ENCODE measurements at regions of chr3 and their contacts with region 1.

Region 1: DNA sequence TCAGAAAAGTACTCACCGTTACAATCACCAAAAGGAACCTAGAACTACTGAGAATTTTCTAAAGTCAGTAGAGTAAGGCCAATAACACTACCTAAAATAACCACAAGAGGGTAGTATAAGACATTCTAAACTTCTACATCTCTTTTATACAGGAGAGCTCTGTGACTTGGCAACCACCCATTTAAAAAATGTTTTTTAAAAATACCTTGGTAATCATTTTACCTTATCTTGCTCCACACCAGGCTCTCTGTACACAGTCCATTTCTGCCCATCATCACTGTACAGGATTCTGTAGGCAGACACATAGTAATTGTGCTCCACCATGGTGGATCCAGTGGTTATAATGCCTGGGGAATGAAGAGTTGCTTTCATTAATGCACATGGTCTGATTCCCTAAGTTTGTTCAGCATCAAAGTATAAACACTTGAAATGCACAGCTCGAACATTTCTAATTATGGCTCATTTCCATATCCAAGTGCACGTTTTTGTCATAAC is 54.5 kb downstream of the ST3GAL6 start:
- DNase-seq: no peak
- H3K4me3 ChIP-seq: no peak overlapping the region
- H3K27ac ChIP-seq: no peak overlapping the region
- H3K4me1 ChIP-seq: no peaks in the 10 kb centered on the region
- H3K27me3 ChIP-seq: no peaks in the 10 kb centered on the region
- CTCF ChIP-seq: peak; percentile 38 to 86 (median 66)
- POLR2A ChIP-seq: no peak

Region 2: GRCh38 chr3:98602078-98602678 is 215.4 kb before region 1 on chr3:
- intact Hi-C with region 1: loop called (anchors 5 kb)
- DNase-seq: peak; percentile 26 to 38
- H3K4me3 ChIP-seq: no peak overlapping the region
- H3K27ac ChIP-seq: no peak overlapping the region
- H3K4me1 ChIP-seq: peaks cover 0 to 8% of the 10 kb centered on the region in 2 donors
- H3K27me3 ChIP-seq: no peaks in the 10 kb centered on the region
- CTCF ChIP-seq: peak; percentile 23 to 82 (median 66)
- POLR2A ChIP-seq: no peak

Region 3: GRCh38 chr3:98732286-98733052 is 85.1 kb before region 1 on chr3:
- intact Hi-C with region 1: no loop called
- DNase-seq: peak; percentile 68 to 73
- H3K4me3 ChIP-seq: peak overlapping the region; percentile 63 to 86 (median 84)
- H3K27ac ChIP-seq: peak overlapping the region; percentile 61 to 92 (median 92)
- H3K4me1 ChIP-seq: peaks cover 0 to 4% of the 10 kb centered on the region in 2 donors
- H3K27me3 ChIP-seq: no peaks in the 10 kb centered on the region
- CTCF ChIP-seq: no peak
- POLR2A ChIP-seq: peak in 1 of 2 donors; percentile 84

Region 4: DNA sequence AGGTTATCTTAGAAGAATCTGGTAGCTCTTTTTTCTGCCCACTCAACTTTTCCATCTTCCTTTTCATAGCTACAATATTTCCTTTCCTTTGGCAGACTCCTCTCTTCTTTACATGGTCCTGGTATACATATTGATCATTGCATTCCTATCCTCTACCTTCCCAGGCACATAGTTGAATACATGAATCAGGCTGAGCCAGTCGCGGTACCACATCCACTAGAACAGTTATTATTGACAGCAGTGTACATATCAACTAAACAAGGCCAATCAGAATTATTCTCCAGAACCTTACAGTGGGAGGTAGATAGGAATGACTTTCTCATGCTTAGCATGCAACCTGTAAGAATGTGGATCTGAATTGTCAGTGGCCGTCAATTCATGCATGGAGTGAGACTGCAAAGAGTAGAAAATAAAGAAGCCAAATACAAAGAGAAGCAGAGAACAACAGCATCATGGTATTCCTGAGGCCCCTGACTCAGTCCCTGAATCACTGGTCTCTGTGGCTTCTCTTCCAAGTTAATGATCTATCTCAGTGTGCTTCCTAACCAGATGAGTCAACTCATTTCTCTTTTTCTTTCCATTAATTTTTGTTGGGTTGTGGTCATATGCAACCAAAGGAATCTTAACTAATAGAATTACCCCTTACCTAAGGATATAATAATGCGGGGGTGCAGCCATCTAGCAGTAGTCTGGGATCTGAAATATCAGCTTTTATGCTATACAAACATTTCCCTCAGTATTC is 144.8 kb after region 1 on chr3:
- intact Hi-C with region 1: no loop called
- DNase-seq: no peak
- H3K4me3 ChIP-seq: no peak overlapping the region
- H3K27ac ChIP-seq: no peak overlapping the region
- H3K4me1 ChIP-seq: no peaks in the 10 kb centered on the region
- H3K27me3 ChIP-seq: no peaks in the 10 kb centered on the region
- CTCF ChIP-seq: no peak
- POLR2A ChIP-seq: no peak

Region 5: GRCh38 chr3:98994128-98994762 is 176.7 kb after region 1 on chr3:
- intact Hi-C with region 1: loop called (anchors 2 kb)
- DNase-seq: no peak
- H3K4me3 ChIP-seq: no peak overlapping the region
- H3K27ac ChIP-seq: no peak overlapping the region
- H3K4me1 ChIP-seq: no peaks in the 10 kb centered on the region
- H3K27me3 ChIP-seq: no peaks in the 10 kb centered on the region
- CTCF ChIP-seq: peak; percentile 56 to 88 (median 65)
- POLR2A ChIP-seq: no peak

Measured in thyroid gland (tissue), 4 donors.